ENCODE measurements at regions of chr17 and their contacts with region 1.

Region 1: DNA sequence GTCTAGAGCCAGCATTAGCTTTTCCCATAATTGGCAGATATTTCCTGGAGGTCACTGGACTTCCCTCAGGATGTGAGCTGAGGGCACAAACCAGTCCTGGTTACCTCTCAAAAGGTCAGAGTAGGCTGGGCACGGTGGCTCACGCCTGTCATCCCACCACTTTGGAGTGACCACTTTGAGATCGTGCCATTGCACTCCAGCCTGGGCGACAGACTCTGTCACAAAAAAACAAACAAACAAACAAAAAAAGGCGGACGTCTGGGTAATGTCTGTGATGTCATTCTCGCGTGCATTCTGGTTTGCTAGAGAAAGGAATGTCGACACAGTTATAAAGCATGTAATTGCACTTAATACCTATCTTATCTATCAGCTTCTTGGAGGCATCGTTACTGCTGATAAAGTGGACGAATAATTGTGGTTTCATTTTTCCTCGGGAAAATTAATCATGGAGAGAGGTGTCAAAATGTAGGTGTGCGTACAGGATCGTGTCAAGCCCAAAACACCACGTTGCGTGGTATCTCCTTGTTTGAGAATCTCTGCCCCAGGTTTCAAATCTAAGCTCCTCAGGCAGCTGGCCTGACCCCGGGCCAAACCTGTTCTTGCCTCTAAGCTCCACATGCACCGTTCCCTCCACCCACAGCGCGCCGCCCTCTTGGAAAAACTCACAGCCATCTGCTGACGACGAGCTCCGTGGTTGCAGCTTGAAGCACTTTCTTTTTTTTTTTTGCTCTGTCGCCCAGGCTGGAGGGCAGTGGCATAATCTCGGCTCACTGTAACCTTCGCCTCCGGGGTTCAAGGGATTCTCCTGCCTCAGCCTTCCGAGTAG is 6.5 kb upstream of the CRK start:
- DNase-seq: peak; percentile 41
- H3K4me3 Mint-ChIP-seq: peak overlapping the region; percentile 32
- H3K27ac Mint-ChIP-seq: peak overlapping the region; percentile 62
- H3K4me1 Mint-ChIP-seq: peaks cover 32% of the 10 kb centered on the region
- H3K27me3 Mint-ChIP-seq: peaks cover 10% of the 10 kb centered on the region

Region 2: DNA sequence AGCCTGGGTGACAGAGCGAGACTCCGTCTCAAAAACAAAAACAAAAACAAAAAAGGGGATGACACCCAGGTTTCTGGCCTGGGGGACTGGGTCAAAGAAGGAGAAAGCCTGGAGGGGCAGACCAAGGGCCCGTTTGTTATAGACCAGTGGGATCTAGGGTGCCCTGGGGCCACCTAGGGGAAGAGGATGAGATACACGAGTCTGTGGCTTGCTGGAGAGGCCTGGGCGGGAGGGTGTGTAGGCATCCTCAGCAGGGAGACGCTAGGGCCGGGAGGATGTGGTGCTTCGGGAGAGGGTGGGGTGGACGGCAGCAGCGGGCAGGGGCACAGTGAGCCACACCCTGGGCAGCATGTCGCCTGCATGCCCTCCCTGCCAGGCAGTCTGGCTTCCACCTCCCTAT is 10.7 kb after region 1 on chr17:
- CTCF ChIA-PET with region 1: no interaction called
- POLR2A ChIA-PET with region 1: no interaction called
- intact Hi-C with region 1: loop called (anchors 1 kb)
- DNase-seq: peak; percentile 40
- H3K4me3 Mint-ChIP-seq: no peak overlapping the region
- H3K27ac Mint-ChIP-seq: no peak overlapping the region
- H3K4me1 Mint-ChIP-seq: peaks cover 10% of the 10 kb centered on the region
- H3K27me3 Mint-ChIP-seq: no peaks in the 10 kb centered on the region

Measured in activated CD4-positive, alpha-beta memory T cell treated with anti-CD3 and anti-CD28 coated beads for 36 hours (primary cell).